Mammary epithelial cell (primary cell): ENCODE measurements at regions of chr15 and their contacts with region 1.

Region 1: GRCh38 chr15:66883322-66883911 is 181.4 kb downstream of the SMAD6 start:
- DNase-seq: peak; percentile 99
- H3K4me3 ChIP-seq: no peak overlapping the region
- H3K27ac ChIP-seq: peak overlapping the region; percentile 41
- H3K4me1 ChIP-seq: peaks cover 36% of the 10 kb centered on the region
- H3K27me3 ChIP-seq: no peaks in the 10 kb centered on the region
- CTCF ChIP-seq: no peak

Region 2: DNA sequence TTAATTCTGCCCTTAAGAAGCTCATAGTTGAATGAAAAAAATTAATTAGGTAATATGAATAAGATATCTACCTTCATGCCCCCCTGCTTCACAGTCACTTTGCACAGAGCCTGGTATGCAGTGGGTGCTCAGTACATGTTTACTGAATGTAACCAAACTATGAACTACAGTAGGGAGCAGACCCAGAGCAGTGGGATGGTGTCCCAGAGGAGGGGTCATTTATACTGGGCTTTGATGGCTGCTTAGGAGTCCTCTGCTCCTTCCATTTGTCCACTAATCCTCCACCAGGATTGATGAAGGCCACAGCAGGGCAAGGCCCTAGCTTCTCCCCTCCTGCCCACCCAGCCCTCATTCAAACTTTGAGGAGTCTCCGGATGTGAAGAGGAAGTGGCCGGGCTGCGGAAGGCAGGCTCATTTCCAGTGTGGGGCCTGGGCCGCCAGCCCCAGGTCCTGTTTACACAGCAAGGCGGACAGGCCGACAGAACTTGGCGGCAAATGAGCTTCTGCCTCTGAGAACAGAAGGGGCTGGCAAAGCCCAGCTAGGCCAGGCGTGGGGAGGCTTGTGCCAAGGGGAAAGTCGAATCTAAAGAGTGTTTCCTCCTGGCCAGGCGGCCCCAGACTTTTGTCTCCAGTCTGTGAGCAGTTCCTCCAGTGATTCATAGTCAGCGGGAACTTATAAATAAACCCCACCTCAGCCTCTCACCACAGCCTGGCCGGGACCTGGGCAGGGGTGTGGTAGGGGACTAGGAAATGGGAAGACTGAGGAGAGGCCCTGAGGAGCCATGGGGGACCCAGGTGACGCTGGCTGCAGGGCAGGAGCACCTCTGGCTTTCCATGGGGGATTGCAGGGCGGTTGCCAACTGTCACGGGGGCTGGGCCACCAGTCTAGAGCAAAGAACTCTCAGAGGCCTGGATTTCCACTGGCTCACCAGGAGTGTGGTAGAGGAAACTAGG is 266.0 kb before region 1 on chr15:
- CTCF ChIA-PET with region 1: no interaction called
- dilution Hi-C with region 1: no loop called
- in situ Hi-C with region 1: no loop called
- intact Hi-C with region 1: no loop called
- DNase-seq: peak; percentile 20
- H3K4me3 ChIP-seq: no peak overlapping the region
- H3K27ac ChIP-seq: no peak overlapping the region
- H3K4me1 ChIP-seq: peaks cover 4% of the 10 kb centered on the region
- H3K27me3 ChIP-seq: peaks cover 9% of the 10 kb centered on the region
- CTCF ChIP-seq: no peak

Region 3: GRCh38 chr15:66789029-66790025 is 94.1 kb before region 1 on chr15:
- CTCF ChIA-PET with region 1: no interaction called
- dilution Hi-C with region 1: loop called (anchors 5 kb)
- in situ Hi-C with region 1: no loop called
- intact Hi-C with region 1: no loop called
- DNase-seq: no peak
- H3K4me3 ChIP-seq: no peak overlapping the region
- H3K27ac ChIP-seq: no peak overlapping the region
- H3K4me1 ChIP-seq: no peaks in the 10 kb centered on the region
- H3K27me3 ChIP-seq: no peaks in the 10 kb centered on the region
- CTCF ChIP-seq: peak; percentile 50 to 63

Region 4: GRCh38 chr15:66862878-66863335 is 20.5 kb before region 1 on chr15:
- CTCF ChIA-PET with region 1: interaction called, 3 read pairs
- dilution Hi-C with region 1: no loop called
- in situ Hi-C with region 1: no loop called
- intact Hi-C with region 1: loop called (anchors 1 kb)
- DNase-seq: peak; percentile 82
- H3K4me3 ChIP-seq: no peak overlapping the region
- H3K27ac ChIP-seq: peak overlapping the region; percentile 8
- H3K4me1 ChIP-seq: peaks cover 12% of the 10 kb centered on the region
- H3K27me3 ChIP-seq: no peaks in the 10 kb centered on the region
- CTCF ChIP-seq: peak; percentile 95 to 97

Region 5: DNA sequence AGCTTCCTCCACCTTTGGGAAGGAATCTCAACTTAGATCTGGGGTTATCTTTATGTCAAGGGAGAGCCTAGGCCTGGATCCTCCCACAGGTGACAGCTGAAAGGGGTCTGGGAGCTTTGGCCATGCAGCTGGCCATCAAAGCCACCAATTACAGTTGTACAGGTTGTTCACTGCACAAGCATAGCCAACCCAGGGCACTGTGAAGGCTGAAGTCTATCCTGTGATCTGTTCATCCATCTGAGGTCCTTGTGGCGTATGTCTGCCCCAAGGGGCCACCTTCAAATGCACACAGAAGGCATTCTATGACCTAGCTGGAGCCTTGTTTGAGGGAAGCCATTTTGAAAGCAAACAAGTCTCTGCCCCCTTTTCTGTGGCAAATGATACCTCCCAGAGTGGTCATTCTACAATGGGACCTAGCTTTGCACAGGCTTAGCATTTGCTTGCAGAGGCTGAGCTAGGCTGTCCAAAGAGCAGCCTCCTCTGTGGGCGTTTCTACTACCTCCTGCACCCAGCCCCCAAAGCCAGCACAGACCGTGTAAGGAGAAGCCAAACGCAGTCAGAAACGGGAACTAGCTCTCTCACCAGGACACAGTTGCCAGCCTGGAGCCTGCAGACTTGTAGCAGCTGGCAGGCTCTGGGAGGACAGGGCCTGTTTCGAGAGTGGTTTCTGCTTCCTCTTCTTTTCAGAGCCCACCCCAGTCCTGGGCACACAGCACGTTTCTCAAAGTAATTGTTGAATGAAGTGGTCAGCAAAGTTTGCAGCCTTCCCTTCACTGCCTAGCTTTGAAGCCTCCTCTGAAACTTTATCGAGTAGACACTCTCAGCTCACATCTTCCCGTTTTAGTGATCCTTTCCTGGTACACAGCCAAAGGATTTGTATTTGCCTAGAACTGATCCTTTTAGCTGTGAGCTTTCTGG is 24.7 kb after region 1 on chr15:
- CTCF ChIA-PET with region 1: interaction called, 3 read pairs
- dilution Hi-C with region 1: no loop called
- in situ Hi-C with region 1: no loop called
- intact Hi-C with region 1: loop called (anchors 1 kb)
- DNase-seq: no peak
- H3K4me3 ChIP-seq: no peak overlapping the region
- H3K27ac ChIP-seq: no peak overlapping the region
- H3K4me1 ChIP-seq: no peaks in the 10 kb centered on the region
- H3K27me3 ChIP-seq: peaks cover 3% of the 10 kb centered on the region
- CTCF ChIP-seq: no peak

Region 6: GRCh38 chr15:66931768-66932633 is 48.6 kb after region 1 on chr15:
- CTCF ChIA-PET with region 1: no interaction called
- dilution Hi-C with region 1: loop called (anchors 5 kb)
- in situ Hi-C with region 1: no loop called
- intact Hi-C with region 1: no loop called
- DNase-seq: peak; percentile 54
- H3K4me3 ChIP-seq: no peak overlapping the region
- H3K27ac ChIP-seq: no peak overlapping the region
- H3K4me1 ChIP-seq: peaks cover 19% of the 10 kb centered on the region
- H3K27me3 ChIP-seq: no peaks in the 10 kb centered on the region
- CTCF ChIP-seq: no peak

Region 7: GRCh38 chr15:67134067-67134838 is 250.8 kb after region 1 on chr15:
- CTCF ChIA-PET with region 1: no interaction called
- dilution Hi-C with region 1: no loop called
- in situ Hi-C with region 1: no loop called
- intact Hi-C with region 1: no loop called
- DNase-seq: peak; percentile 68
- H3K4me3 ChIP-seq: no peak overlapping the region
- H3K27ac ChIP-seq: peak overlapping the region; percentile 64
- H3K4me1 ChIP-seq: peaks cover 30% of the 10 kb centered on the region
- H3K27me3 ChIP-seq: no peaks in the 10 kb centered on the region
- CTCF ChIP-seq: no peak